Lower leg skin (tissue), 4 donors: ENCODE measurements at regions of chr14 and their contacts with region 1.

Region 1: DNA sequence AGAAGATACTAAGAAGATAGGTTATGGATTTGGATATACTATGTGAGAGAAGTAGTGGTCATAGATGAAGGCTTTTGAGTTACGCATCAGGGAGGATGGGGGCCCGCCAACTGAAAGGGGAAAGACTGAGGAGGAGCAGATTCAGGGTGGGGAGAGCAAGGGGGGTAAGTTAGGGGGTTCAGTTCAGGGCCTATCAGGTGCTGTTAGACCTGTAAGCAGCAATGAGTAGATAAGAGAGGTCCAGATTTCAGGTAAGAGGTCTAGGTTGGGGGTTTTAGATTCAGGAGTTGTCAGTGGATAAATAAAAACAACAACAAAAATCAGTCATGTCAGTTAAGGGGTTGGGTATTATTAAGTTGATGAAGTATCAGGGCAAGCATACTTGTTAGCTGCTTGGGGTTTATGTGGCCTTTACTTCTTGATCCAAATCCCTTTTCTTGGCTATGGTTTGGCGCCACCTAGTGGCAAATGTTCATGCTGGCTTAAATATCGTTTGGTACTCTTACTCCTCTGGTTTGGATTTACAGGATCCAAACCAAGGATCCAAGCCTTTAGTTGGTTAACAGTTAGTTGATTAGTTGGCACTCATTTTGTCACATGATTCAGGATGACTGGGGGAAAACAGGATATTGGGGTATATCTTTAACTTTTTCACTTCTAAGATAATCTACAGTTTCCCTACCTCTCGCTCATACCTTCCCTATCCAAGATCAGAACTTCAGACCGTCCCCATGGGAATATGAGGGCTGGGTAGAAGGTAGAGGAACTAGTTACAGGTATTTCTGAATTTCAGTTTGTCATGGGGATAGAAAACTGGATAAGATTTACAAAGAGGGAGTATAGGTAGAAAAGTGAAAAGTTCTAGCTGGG is 65.1 kb downstream of the PCNX1 start:
- DNase-seq: peak; percentile 90 to 97
- H3K4me3 ChIP-seq: no peak overlapping the region
- CTCF ChIP-seq: peak in 1 of 3 donors; percentile 37
- POLR2A ChIP-seq: no peak

Region 2: GRCh38 chr14:70821584-70822529 is 150.5 kb before region 1 on chr14:
- intact Hi-C with region 1: loop called (anchors 10 kb)
- DNase-seq: peak in 1 of 2 donors; percentile 90
- H3K4me3 ChIP-seq: peak overlapping the region; percentile 35
- CTCF ChIP-seq: no peak
- POLR2A ChIP-seq: no peak

Region 3: DNA sequence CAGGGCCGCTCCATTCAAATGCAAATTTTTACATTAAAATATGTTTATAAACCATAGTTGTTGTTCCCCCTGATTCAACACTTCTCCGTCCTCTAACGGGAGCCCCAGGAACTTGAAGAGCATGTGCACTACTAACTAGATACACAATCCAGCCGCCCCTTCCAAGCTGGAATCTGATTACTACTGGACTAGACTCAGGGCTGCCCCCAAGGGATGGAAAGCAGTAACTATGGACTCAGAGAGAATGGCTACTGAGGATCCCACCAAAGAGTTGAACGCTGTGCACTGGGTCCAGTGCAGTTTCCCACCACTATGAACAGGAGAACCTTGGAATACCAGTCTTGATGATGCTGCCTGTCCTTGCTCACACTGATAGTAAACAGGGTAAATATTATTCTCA is 113.7 kb before region 1 on chr14:
- intact Hi-C with region 1: no loop called
- DNase-seq: no peak
- H3K4me3 ChIP-seq: no peak overlapping the region
- CTCF ChIP-seq: no peak
- POLR2A ChIP-seq: no peak

Region 4: GRCh38 chr14:70907176-70907995 is 65.0 kb before region 1 on chr14 and contains the start of gene PCNX1:
- intact Hi-C with region 1: loop called (anchors 5 kb)
- DNase-seq: peak; percentile 81 to 97
- H3K4me3 ChIP-seq: peak within 1 kb of the TSS; percentile 90
- CTCF ChIP-seq: peak in 1 of 3 donors; percentile 44
- POLR2A ChIP-seq: no peak
- total RNA-seq, gene PCNX1: 14.7 to 29.4 (median 25.6) TPM